ENCODE measurements at regions of chr12 and their contacts with region 1.

Region 1: GRCh38 chr12:51238510-51239334 is at the start of gene DAZAP2:
- DNase-seq: peak; percentile 54
- H3K4me3 ChIP-seq: peak within 1 kb of the TSS; percentile 100
- CTCF ChIP-seq: peak; percentile 13

Region 2: GRCh38 chr12:51083126-51083833 is 155.4 kb before region 1 on chr12 and contains the start of gene CSRNP2:
- CTCF ChIA-PET with region 1: no interaction called
- POLR2A ChIA-PET with region 1: interaction called, 10 read pairs
- DNase-seq: peak; percentile 64
- H3K4me3 ChIP-seq: peak within 1 kb of the TSS; percentile 86
- CTCF ChIP-seq: no peak

Region 3: GRCh38 chr12:51132693-51133092 is 106.0 kb before region 1 on chr12:
- CTCF ChIA-PET with region 1: no interaction called
- POLR2A ChIA-PET with region 1: no interaction called
- DNase-seq: no peak
- H3K4me3 ChIP-seq: no peak overlapping the region
- CTCF ChIP-seq: no peak

Region 4: GRCh38 chr12:51188359-51189051 is 50.2 kb before region 1 on chr12:
- CTCF ChIA-PET with region 1: no interaction called
- POLR2A ChIA-PET with region 1: no interaction called
- DNase-seq: no peak
- H3K4me3 ChIP-seq: no peak overlapping the region
- CTCF ChIP-seq: no peak

Region 5: DNA sequence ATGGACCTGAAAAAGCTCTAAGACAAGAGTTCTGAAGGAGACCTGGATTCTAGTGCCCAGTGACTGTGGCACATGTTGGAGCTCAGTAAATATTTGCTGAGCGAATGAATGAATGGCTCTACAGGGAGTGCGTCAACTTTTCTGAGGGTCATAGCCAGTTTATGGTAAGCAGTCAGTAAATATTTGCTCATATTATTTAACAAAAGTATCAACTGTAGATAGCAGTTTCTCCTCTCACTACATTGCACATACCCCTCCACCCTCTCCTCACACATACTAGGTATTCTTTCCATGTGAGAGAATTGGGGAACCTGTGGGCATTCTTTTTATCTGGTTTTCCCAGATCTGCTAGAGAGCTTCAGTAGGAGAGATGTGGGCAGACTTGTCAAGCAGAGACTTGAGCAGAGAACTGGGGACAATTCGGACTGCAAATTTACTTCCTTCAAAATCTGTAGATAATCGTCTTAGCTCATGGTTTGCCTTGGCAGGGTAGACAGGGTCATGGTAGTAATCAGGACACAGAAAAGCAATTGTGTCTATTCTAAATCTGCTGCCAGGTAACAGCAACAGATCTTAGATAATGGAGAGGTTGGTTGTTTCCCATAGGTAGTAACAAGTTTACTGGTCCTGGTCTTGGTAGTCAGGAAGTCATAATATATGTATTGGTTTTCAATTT is 191.6 kb after region 1 on chr12:
- CTCF ChIA-PET with region 1: no interaction called
- POLR2A ChIA-PET with region 1: no interaction called
- DNase-seq: no peak
- H3K4me3 ChIP-seq: no peak overlapping the region
- CTCF ChIP-seq: no peak

Measured in AG04449 (cell line).